Ascending aorta (tissue), 2 donors: ENCODE measurements at regions of chrX and their contacts with region 1.

Region 1: GRCh38 chrX:104668550-104668949 is 102.6 kb downstream of the IL1RAPL2 start:
- DNase-seq: no peak
- H3K4me3 ChIP-seq: no peak overlapping the region
- H3K27ac ChIP-seq: no peak overlapping the region
- H3K4me1 ChIP-seq: no peaks in the 10 kb centered on the region
- H3K27me3 ChIP-seq: no peaks in the 10 kb centered on the region
- CTCF ChIP-seq: no peak

Region 2: GRCh38 chrX:103730796-103731493 is 937.6 kb before region 1 on chrX:
- intact Hi-C with region 1: no loop called
- DNase-seq: no peak
- H3K4me3 ChIP-seq: no peak overlapping the region
- H3K27ac ChIP-seq: peak overlapping the region; percentile 20 to 65
- H3K4me1 ChIP-seq: no peaks in the 10 kb centered on the region
- H3K27me3 ChIP-seq: no peaks in the 10 kb centered on the region
- CTCF ChIP-seq: no peak

Region 3: GRCh38 chrX:104306180-104306579 is 362.4 kb before region 1 on chrX:
- intact Hi-C with region 1: no loop called
- DNase-seq: no peak
- H3K4me3 ChIP-seq: no peak overlapping the region
- H3K27ac ChIP-seq: no peak overlapping the region
- H3K4me1 ChIP-seq: no peaks in the 10 kb centered on the region
- H3K27me3 ChIP-seq: no peaks in the 10 kb centered on the region
- CTCF ChIP-seq: no peak

Region 4: DNA sequence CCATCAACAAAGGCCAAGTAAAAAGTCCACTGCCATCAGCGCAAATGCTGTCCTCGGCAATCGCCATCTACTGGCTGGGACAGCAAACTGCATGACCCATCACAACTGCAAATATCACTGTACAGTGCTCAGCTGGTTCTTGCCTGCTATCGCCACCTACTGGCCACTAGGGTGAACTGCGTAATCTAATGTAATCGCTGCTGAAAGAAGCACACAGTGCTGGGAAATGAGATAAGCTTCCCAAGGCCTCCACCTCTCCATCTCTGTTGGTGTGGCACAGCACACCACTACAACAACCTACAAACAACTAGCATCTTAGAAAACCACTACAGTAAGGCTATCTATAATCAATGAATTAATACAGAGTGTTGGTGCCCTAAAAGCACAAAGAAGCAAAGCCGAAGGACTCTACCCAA is 253.7 kb after region 1 on chrX:
- intact Hi-C with region 1: loop called (anchors 2 kb)
- DNase-seq: peak; percentile 8 to 77
- H3K4me3 ChIP-seq: no peak overlapping the region
- H3K27ac ChIP-seq: no peak overlapping the region
- H3K4me1 ChIP-seq: no peaks in the 10 kb centered on the region
- H3K27me3 ChIP-seq: no peaks in the 10 kb centered on the region
- CTCF ChIP-seq: peak; percentile 71 to 89 (median 86)